Activated T-helper 2 cell treated with anti-CD3 and anti-CD28 coated beads, Interferon-gamma antibody, Interleukin-2, Interleukin-4, amounts not matched to agents 10 μg/mL and 5 μg/mL and 100 μg/mL, durations not matched to agents 14 hours and 24 hours and 36 hours (primary cell): ENCODE measurements at regions of chr16 and their contacts with region 1.

Region 1: GRCh38 chr16:81723098-81723723 is 55.9 kb upstream of the PLCG2 start:
- DNase-seq: peak; percentile 23
- H3K4me3 Mint-ChIP-seq: no peak overlapping the region
- H3K27ac Mint-ChIP-seq: no peak overlapping the region
- H3K4me1 Mint-ChIP-seq: peaks cover 6% of the 10 kb centered on the region
- H3K27me3 Mint-ChIP-seq: peaks cover 4% of the 10 kb centered on the region

Region 2: GRCh38 chr16:81366316-81366932 is 356.8 kb before region 1 on chr16:
- intact Hi-C with region 1: loop called (anchors 1 kb)
- DNase-seq: no peak
- H3K4me3 Mint-ChIP-seq: no peak overlapping the region
- H3K27ac Mint-ChIP-seq: no peak overlapping the region
- H3K4me1 Mint-ChIP-seq: peaks cover 7% of the 10 kb centered on the region
- H3K27me3 Mint-ChIP-seq: no peaks in the 10 kb centered on the region

Region 3: GRCh38 chr16:82031116-82032084 is 308.2 kb after region 1 on chr16:
- intact Hi-C with region 1: no loop called
- DNase-seq: no peak
- H3K4me3 Mint-ChIP-seq: no peak overlapping the region
- H3K27ac Mint-ChIP-seq: no peak overlapping the region
- H3K4me1 Mint-ChIP-seq: no peaks in the 10 kb centered on the region
- H3K27me3 Mint-ChIP-seq: peaks cover 13% of the 10 kb centered on the region